ENCODE measurements at regions of chr1 and their contacts with region 1.

Region 1: GRCh38 chr1:244451951-244452795 is 464 bp upstream of the ADSS2 start:
- DNase-seq: peak; percentile 96 to 99
- H3K4me3 ChIP-seq: peak overlapping the region; percentile 85
- H3K27ac ChIP-seq: 0 out of 2 replicates have a peak overlapping the region, but pooled peaks have one; percentile 16
- H3K4me1 ChIP-seq: peaks cover 48% of the 10 kb centered on the region
- H3K27me3 ChIP-seq: no peaks in the 10 kb centered on the region
- CTCF ChIP-seq: peak; percentile 47; the same call in 1 of the 2 replicates

Region 2: DNA sequence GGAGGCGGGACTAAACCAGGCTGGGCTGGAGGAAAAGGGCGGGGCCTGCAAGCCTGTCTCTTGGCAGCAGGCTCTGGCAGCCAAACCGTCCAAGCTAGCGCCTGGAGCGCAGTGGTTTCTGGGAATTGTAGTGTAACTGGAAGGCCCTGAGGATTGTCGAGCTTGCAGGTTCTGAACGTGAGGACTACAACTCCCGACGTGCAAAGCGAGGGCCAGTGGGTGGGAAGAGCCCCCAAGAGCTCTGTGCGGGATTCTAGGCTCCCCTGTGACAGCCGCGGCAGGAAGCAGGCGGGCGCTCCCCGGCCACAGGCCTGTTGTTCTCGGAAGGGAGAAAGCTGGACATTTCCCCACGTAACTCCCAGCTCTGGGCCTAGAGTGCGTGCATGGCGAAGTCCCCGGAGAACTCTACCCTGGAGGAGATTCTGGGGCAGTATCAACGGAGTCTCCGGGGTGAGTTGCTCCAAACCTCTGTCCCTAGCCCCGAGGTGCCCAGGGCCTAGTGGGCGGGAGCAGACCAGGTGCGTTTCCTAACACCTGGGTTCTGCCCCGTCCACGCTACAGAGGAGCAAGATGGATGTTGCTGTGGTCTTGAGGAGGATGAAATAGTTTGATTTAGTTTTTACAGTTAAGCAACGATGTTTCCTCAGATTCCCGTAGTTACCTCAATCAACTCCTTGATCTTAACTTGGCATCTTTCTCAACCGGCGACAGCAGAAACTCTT is 1196.2 kb before region 1 on chr1 and contains the start of gene SDCCAG8:
- CTCF ChIA-PET with region 1: no interaction called
- POLR2A ChIA-PET with region 1: no interaction called
- intact Hi-C with region 1: loop called (anchors 10 kb)
- DNase-seq: peak; percentile 96 to 98
- H3K4me3 ChIP-seq: peak within 1 kb of the TSS; percentile 76
- H3K27ac ChIP-seq: peak within 1 kb of the TSS; percentile 45
- H3K4me1 ChIP-seq: peaks cover 37% of the 10 kb centered on the region
- H3K27me3 ChIP-seq: no peaks in the 10 kb centered on the region
- CTCF ChIP-seq: no peak
- total RNA-seq, gene SDCCAG8: 20.7 and 22.7 TPM in 2 replicates

Region 3: GRCh38 chr1:243926803-243927279 is 525.3 kb before region 1 on chr1:
- CTCF ChIA-PET with region 1: no interaction called
- POLR2A ChIA-PET with region 1: no interaction called
- intact Hi-C with region 1: loop called (anchors 5 kb)
- DNase-seq: peak; percentile 56 to 100
- H3K4me3 ChIP-seq: no peak overlapping the region
- H3K27ac ChIP-seq: peak overlapping the region; percentile 97
- H3K4me1 ChIP-seq: peaks cover 67% of the 10 kb centered on the region
- H3K27me3 ChIP-seq: no peaks in the 10 kb centered on the region
- CTCF ChIP-seq: no peak

Region 4: GRCh38 chr1:244322791-244323521 is 129.2 kb before region 1 on chr1:
- CTCF ChIA-PET with region 1: no interaction called
- POLR2A ChIA-PET with region 1: no interaction called
- intact Hi-C with region 1: loop called (anchors 2 kb)
- DNase-seq: peak; percentile 68 to 96
- H3K4me3 ChIP-seq: peak overlapping the region; percentile 52
- H3K27ac ChIP-seq: peak overlapping the region; percentile 96
- H3K4me1 ChIP-seq: peaks cover 45% of the 10 kb centered on the region
- H3K27me3 ChIP-seq: no peaks in the 10 kb centered on the region
- CTCF ChIP-seq: no peak

Region 5: DNA sequence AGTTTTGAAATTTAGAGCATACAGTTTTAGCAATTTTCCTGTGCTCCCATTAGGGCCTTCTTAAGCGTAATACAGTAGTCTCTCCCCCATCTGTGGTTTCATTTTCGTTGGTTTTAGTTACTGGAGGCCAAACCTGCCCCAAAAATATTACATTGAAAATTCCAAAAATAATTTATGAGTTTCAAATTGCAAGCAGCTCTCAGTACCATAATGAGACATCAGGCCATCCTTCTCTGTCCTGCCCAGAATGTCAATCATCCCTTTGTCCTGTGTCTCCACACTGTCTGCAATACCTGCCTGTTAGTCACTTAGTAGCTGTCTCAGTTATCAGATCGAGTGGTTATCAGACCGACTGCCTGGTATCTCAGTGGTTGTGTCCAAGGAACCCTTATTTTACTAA is 45.8 kb before region 1 on chr1:
- CTCF ChIA-PET with region 1: no interaction called
- POLR2A ChIA-PET with region 1: no interaction called
- intact Hi-C with region 1: no loop called
- DNase-seq: no peak
- H3K4me3 ChIP-seq: no peak overlapping the region
- H3K27ac ChIP-seq: no peak overlapping the region
- H3K4me1 ChIP-seq: no peaks in the 10 kb centered on the region
- H3K27me3 ChIP-seq: no peaks in the 10 kb centered on the region
- CTCF ChIP-seq: no peak

Region 6: GRCh38 chr1:244536316-244536715 is 84.1 kb after region 1 on chr1:
- CTCF ChIA-PET with region 1: no interaction called
- POLR2A ChIA-PET with region 1: no interaction called
- intact Hi-C with region 1: no loop called
- DNase-seq: no peak
- H3K4me3 ChIP-seq: no peak overlapping the region
- H3K27ac ChIP-seq: no peak overlapping the region
- H3K4me1 ChIP-seq: no peaks in the 10 kb centered on the region
- H3K27me3 ChIP-seq: no peaks in the 10 kb centered on the region
- CTCF ChIP-seq: no peak

Region 7: DNA sequence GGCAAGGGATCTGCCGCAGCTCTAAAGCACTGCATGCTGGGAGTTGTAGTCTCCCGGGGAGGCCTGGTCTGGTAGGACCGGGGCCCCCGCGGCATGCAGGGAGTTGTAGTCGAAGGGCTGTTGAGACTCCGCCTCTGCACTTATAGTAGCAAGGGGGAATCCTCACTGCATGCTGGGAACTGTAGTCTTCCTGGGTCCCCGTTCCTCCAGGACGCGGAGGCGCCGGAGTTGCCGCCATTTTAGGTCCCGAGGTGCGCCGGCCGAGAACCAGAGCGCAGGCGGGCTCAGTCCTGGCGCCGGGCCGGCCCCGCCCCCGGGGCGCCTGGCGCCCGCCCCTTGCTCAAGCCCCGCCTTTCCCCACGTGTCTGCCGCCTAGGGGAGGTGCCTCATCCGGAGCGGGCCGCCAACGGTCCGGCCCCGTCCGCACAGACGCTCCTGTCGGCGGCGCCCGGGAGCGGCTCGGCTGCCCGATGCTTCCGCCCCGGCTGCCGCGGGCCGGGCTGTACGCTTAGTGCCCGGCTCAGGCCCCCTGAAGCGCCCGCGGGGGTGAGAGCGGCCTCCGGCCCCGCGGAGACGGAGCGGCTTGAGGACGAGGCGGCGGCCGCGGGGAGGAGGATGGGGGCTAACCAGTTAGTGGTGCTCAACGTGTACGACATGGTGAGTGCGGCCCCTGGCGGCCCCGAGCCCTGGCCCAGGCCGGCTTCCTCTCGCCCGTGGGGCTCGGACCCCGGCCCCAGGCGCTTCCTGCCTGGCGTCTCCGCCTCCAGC is 200.7 kb after region 1 on chr1 and contains the start of gene DESI2:
- CTCF ChIA-PET with region 1: no interaction called
- POLR2A ChIA-PET with region 1: no interaction called
- intact Hi-C with region 1: loop called (anchors 1 kb)
- DNase-seq: peak; percentile 96 to 97
- H3K4me3 ChIP-seq: peak within 1 kb of the TSS; percentile 76
- H3K27ac ChIP-seq: peak within 1 kb of the TSS; percentile 48
- H3K4me1 ChIP-seq: peaks cover 28% of the 10 kb centered on the region
- H3K27me3 ChIP-seq: no peaks in the 10 kb centered on the region
- CTCF ChIP-seq: peak; percentile 68; the same call in 1 of the 2 replicates
- total RNA-seq, gene DESI2: 34.1 and 45.8 TPM in 2 replicates

Region 8: DNA sequence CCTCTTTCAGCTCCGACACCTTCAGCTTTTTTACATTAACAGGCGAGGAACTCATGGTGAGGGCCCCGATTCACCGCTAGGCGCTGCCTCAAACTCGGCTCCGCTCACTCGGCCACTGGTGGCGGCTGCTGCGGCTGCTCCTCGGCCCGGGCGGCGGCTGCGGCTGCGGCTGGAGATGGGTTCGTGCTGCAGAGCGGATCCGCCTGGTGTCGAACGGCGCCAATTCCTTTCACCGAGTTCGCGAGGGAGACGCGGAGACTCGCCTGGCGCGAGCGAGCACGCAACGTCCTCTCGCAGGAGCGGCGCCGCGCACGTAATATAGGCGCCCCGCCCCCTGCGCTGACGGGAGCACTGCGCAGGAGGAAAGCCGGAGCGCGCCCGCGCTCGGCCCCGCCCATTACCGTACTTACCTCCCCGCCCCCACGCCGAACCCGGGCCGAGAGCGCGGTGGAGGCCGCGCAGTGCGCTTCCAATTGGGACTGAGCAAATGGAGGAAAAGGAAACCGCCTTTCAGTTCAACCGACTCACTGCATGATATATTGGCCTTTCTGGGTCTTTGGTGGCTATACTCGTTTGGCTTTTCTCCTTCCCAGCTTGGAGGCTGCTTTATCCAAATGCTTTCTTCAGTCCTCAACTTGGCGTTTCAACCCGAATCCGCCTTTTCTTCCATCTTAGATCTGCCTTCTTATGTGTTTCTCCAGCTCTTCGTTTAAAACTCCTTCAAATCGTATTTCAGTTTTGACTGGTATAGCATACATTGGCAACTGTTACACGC is 412.3 kb after region 1 on chr1 and contains the start of gene HNRNPU:
- CTCF ChIA-PET with region 1: no interaction called
- POLR2A ChIA-PET with region 1: no interaction called
- intact Hi-C with region 1: loop called (anchors 2 kb)
- DNase-seq: peak; percentile 84 to 97
- H3K4me3 ChIP-seq: peak within 1 kb of the TSS; percentile 98
- H3K27ac ChIP-seq: peak within 1 kb of the TSS; percentile 70
- H3K4me1 ChIP-seq: peaks cover 31% of the 10 kb centered on the region
- H3K27me3 ChIP-seq: no peaks in the 10 kb centered on the region
- CTCF ChIP-seq: peak; percentile 47; the same call in 1 of the 2 replicates
- total RNA-seq, gene HNRNPU: 291 and 376 TPM in 2 replicates